Activated CD8-positive, alpha-beta T cell treated with anti-CD3 and anti-CD28 coated beads, Interleukin-2, amount 10 ng/mL, durations not matched to agents 7 days and 5 days (primary cell): ENCODE measurements at regions of chr11 and their contacts with region 1.

Region 1: GRCh38 chr11:47766305-47767227 is 575 bp downstream of the FNBP4 start:
- DNase-seq: peak; percentile 85
- ATAC-seq: peak; percentile 49
- H3K4me3 Mint-ChIP-seq: peak overlapping the region; percentile 95
- H3K27ac Mint-ChIP-seq: peak overlapping the region; percentile 100
- H3K4me1 Mint-ChIP-seq: peaks cover 28% of the 10 kb centered on the region
- H3K27me3 Mint-ChIP-seq: no peaks in the 10 kb centered on the region

Region 2: DNA sequence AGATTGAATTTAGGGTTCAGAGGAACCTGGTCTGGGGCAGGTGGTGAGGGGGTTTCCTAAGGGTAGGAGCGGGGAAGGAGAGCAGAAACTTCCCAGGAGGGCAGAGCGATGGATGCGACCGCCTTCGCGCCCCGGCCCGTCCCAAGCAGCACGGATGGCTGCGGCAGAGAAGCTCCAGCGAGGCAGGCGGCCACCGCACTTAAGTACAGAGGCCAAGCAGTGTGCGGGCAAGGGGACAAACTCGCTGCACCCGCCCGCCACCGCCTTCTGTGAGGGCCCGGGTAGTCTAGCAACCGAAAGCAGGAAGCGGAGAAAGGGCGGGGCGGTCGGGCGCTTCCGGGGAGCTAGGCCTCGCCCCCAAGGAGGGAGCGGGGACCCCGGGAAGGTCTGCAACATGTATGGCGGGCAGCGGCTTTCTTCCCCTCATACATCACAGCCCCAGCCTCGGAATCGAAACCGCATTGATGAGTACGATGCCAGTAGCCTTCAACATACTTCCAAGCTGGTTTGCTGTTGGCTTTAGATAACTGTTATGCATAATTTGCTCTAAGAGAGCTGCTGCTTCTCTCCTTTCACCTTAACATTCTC is 51.4 kb before region 1 on chr11 and contains the start of gene AGBL2:
- CTCF ChIA-PET with region 1: interaction called, 4 read pairs
- POLR2A ChIA-PET with region 1: interaction called, 13 read pairs
- DNase-seq: peak; percentile 93
- ATAC-seq: peak; percentile 98
- H3K4me3 Mint-ChIP-seq: peak within 1 kb of the TSS; percentile 94
- H3K27ac Mint-ChIP-seq: peak within 1 kb of the TSS; percentile 96
- H3K4me1 Mint-ChIP-seq: peaks cover 31% of the 10 kb centered on the region
- H3K27me3 Mint-ChIP-seq: no peaks in the 10 kb centered on the region
- total RNA-seq, gene AGBL2: 5.6 to 7.8 TPM